ENCODE measurements at regions of chr4 and their contacts with region 1.

Region 1: DNA sequence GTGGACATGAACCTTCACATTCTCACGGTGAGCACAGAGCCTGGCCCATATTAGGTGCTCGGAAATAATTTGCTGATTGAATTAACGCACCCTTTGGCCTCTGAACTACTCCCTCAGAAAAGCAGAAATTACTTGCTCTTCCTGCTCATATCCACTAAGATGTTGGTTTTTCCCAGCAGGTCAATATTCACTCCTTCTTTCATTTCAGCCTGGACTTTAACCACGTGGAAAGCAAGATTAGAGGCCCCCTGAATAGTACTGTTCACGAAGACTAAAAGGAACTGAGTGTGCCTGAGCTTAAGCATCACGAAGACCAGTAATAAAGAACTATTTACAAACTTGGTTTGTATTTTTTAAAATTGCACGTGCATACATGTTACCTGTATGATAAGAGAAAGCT is 9.9 kb downstream of the MTNR1A start:
- DNase-seq: no peak
- ATAC-seq: no peak
- H3K4me3 ChIP-seq: no peak overlapping the region
- H3K27ac ChIP-seq: no peak overlapping the region
- H3K4me1 ChIP-seq: no peaks in the 10 kb centered on the region
- H3K27me3 ChIP-seq: no peaks in the 10 kb centered on the region
- CTCF ChIP-seq: no peak
- EP300 ChIP-seq: no peak
- POLR2A ChIP-seq: no peak
- RAD21 ChIP-seq: no peak

Region 2: GRCh38 chr4:186920483-186920882 is 375.0 kb after region 1 on chr4:
- CTCF ChIA-PET with region 1: no interaction called
- POLR2A ChIA-PET with region 1: no interaction called
- RAD21 ChIA-PET with region 1: no interaction called
- SMC1A ChIA-PET with region 1: no interaction called
- in situ Hi-C with region 1: no loop called
- intact Hi-C with region 1: loop called (anchors 5 kb)
- DNase-seq: no peak
- ATAC-seq: no peak
- H3K4me3 ChIP-seq: no peak overlapping the region
- H3K27ac ChIP-seq: no peak overlapping the region
- H3K4me1 ChIP-seq: no peaks in the 10 kb centered on the region
- H3K27me3 ChIP-seq: no peaks in the 10 kb centered on the region
- CTCF ChIP-seq: no peak
- EP300 ChIP-seq: no peak
- POLR2A ChIP-seq: no peak
- RAD21 ChIP-seq: no peak

Region 3: DNA sequence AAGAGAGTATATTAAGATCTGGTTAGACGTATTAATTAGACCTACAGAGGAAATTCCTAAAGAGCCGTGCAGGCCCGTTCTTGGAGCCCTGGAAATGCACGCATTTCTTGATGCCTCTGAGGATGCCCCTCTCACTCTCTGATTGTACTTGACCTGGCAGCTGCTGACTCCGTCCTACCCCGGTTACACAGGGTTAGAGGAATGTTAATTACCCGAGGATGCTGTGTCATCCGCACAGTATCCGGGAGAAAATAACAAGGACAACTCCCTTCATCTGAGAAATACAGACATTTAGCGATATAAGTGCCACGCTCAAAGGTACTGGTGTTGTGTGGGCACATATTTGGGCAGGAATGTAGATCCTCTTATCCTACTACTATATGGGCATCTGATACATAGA is 582.8 kb after region 1 on chr4:
- CTCF ChIA-PET with region 1: no interaction called
- POLR2A ChIA-PET with region 1: no interaction called
- RAD21 ChIA-PET with region 1: no interaction called
- SMC1A ChIA-PET with region 1: no interaction called
- in situ Hi-C with region 1: no loop called
- intact Hi-C with region 1: no loop called
- DNase-seq: no peak
- ATAC-seq: no peak
- H3K4me3 ChIP-seq: no peak overlapping the region
- H3K27ac ChIP-seq: no peak overlapping the region
- H3K4me1 ChIP-seq: no peaks in the 10 kb centered on the region
- H3K27me3 ChIP-seq: no peaks in the 10 kb centered on the region
- CTCF ChIP-seq: no peak
- EP300 ChIP-seq: no peak
- POLR2A ChIP-seq: no peak
- RAD21 ChIP-seq: no peak

Measured in GM12878 (cell line).